Heart right ventricle (tissue), 16 donors: ENCODE measurements at regions of chr2 and their contacts with region 1.

Region 1: GRCh38 chr2:60881047-60881932 is at the start of gene REL:
- DNase-seq: peak; percentile 92
- ATAC-seq: peak; percentile 96 to 99 (median 97)
- H3K4me3 ChIP-seq: peak within 1 kb of the TSS; percentile 67 to 98 (median 84)
- H3K27ac ChIP-seq: peak within 1 kb of the TSS; percentile 90 to 99 (median 96)
- H3K4me1 ChIP-seq: peaks cover 0 to 42% (median 36%) of the 10 kb centered on the region in 9 donors
- H3K27me3 ChIP-seq: no peaks in the 10 kb centered on the region
- CTCF ChIP-seq: peak in 1 of 9 donors; percentile 2
- total RNA-seq, gene REL: 4.5 to 11.7 (median 6.6) TPM

Region 2: GRCh38 chr2:60745761-60746160 is 135.5 kb before region 1 on chr2:
- intact Hi-C with region 1: no loop called
- DNase-seq: no peak
- ATAC-seq: peak in 1 of 8 donors; percentile 34
- H3K4me3 ChIP-seq: no peak overlapping the region
- H3K27ac ChIP-seq: no peak overlapping the region
- H3K4me1 ChIP-seq: peaks cover 0 to 8% (median 0%) of the 10 kb centered on the region in 9 donors
- H3K27me3 ChIP-seq: peaks cover 0 to 5% (median 0%) of the 10 kb centered on the region in 7 donors
- CTCF ChIP-seq: no peak

Region 3: GRCh38 chr2:60756191-60757041 is 124.9 kb before region 1 on chr2 and contains the start of gene PAPOLG:
- intact Hi-C with region 1: loop called in 1 of 10 experiments (anchors 5 kb)
- DNase-seq: peak; percentile 96 to 97
- ATAC-seq: peak; percentile 99 to 100 (median 100)
- H3K4me3 ChIP-seq: peak within 1 kb of the TSS; percentile 75 to 93 (median 90)
- H3K27ac ChIP-seq: peak within 1 kb of the TSS; percentile 40 to 95 (median 86)
- H3K4me1 ChIP-seq: peaks cover 0 to 28% (median 18%) of the 10 kb centered on the region in 9 donors
- H3K27me3 ChIP-seq: no peaks in the 10 kb centered on the region
- CTCF ChIP-seq: no peak
- total RNA-seq, gene PAPOLG: 6.4 to 11.9 (median 8.8) TPM

Region 4: GRCh38 chr2:60794277-60794863 is 86.9 kb before region 1 on chr2:
- intact Hi-C with region 1: loop called in 1 of 10 experiments (anchors 10 kb)
- DNase-seq: no peak
- ATAC-seq: no peak
- H3K4me3 ChIP-seq: no peak overlapping the region
- H3K27ac ChIP-seq: peak overlapping the region in 1 of 10 donors; percentile 87
- H3K4me1 ChIP-seq: peaks cover 0 to 24% (median 0%) of the 10 kb centered on the region in 9 donors
- H3K27me3 ChIP-seq: no peaks in the 10 kb centered on the region
- CTCF ChIP-seq: peak in 7 of 9 donors; percentile 34 to 63 (median 53)

Region 5: GRCh38 chr2:60806988-60807681 is 74.2 kb before region 1 on chr2:
- intact Hi-C with region 1: loop called in 1 of 10 experiments (anchors 5 kb)
- DNase-seq: no peak
- ATAC-seq: peak in 1 of 8 donors; percentile 55
- H3K4me3 ChIP-seq: no peak overlapping the region
- H3K27ac ChIP-seq: peak overlapping the region in 1 of 10 donors; percentile 66
- H3K4me1 ChIP-seq: peaks cover 0 to 21% (median 0%) of the 10 kb centered on the region in 9 donors
- H3K27me3 ChIP-seq: no peaks in the 10 kb centered on the region
- CTCF ChIP-seq: no peak

Region 6: DNA sequence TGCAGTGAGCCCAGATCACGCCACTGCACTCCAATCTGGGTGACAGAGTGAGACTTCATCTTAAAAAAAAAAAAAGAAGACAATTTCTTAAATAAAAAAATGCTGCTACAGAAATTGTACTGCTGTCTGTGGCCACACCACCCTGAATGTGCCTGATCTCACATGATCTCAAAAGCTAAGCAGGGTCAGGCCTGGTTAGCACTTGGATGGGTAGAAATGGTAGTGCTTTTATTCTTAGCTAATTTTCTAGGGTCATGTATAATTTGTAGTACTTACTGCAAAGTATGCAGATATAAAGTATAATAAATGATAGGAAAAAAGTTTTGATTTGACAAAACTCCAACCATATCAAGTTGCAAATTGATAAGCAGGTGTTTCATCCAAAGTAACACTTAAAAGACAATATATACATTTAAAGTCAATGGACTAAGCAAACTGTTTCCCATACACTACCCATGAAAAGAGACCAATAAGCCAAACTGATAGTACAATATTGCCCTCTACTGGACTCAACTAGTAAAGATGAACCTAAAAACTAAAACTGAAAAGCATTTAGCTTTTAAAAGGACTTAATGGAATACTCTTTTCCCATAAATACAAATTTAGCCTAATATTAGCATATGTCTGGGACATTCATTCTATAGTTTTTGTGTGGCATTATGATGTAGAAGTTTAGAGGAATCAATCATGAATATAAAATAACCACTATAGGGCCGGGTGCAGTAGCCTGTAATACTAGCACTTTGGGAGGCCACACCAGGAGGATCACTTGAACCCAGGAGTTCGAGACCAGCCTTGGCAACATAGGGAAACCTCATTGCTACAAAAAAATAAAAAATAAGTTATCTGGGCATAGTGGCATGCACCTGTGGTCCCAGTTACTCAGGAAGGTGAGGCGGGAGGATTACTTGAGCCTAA is 117.6 kb after region 1 on chr2:
- intact Hi-C with region 1: loop called in 1 of 10 experiments (anchors 10 kb)
- DNase-seq: no peak
- ATAC-seq: peak in 1 of 8 donors; percentile 56
- H3K4me3 ChIP-seq: no peak overlapping the region
- H3K27ac ChIP-seq: no peak overlapping the region
- H3K4me1 ChIP-seq: peaks cover 0 to 11% (median 0%) of the 10 kb centered on the region in 9 donors
- H3K27me3 ChIP-seq: no peaks in the 10 kb centered on the region
- CTCF ChIP-seq: peak in 8 of 9 donors; percentile 40 to 79 (median 70)

Region 7: GRCh38 chr2:61016808-61017555 is 135.7 kb after region 1 on chr2:
- intact Hi-C with region 1: loop called in 1 of 10 experiments (anchors 2 kb)
- DNase-seq: peak; percentile 56 to 70
- ATAC-seq: peak; percentile 81 to 92 (median 89)
- H3K4me3 ChIP-seq: peak overlapping the region; percentile 59 to 97 (median 91)
- H3K27ac ChIP-seq: peak overlapping the region; percentile 65 to 93 (median 92)
- H3K4me1 ChIP-seq: peaks cover 0 to 48% (median 29%) of the 10 kb centered on the region in 9 donors
- H3K27me3 ChIP-seq: no peaks in the 10 kb centered on the region
- CTCF ChIP-seq: no peak